ENCODE measurements at regions of chr5 and their contacts with region 1.

Region 1: DNA sequence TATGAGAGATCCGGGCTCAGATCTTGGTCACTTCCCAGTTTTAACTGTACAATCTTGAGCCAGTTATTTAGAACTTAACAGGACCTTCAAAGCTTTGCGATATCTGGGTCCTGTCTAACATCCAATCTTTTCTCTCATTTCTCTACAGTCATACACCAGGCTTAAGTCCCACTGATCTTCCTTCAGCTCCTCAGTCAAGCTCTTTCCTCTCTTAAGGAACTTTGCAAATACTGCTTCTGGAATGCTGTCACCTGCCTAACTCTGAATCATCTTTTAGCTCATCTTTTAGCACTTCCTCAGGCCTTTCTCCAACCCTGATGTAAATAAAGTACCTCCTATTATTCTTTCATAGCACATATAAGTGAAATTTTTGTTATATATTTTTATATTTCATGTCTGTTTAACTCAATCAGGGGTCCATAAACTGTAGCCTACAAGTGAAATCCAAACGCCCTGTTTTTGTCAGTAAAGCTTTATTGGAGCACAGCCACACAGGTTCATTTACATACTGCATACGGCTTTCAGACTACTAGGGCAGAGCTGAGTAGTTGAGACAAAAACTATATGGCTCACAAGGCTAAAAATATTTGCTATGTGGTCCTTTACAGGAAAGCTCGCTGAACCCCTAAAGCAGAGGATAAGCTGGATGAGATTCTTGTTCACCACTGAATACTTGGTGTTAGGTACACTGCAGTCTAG is 63.5 kb downstream of the MEF2C start:
- DNase-seq: no peak
- ATAC-seq: peak in 1 of 2 donors; percentile 31
- H3K4me3 ChIP-seq: no peak overlapping the region
- H3K27ac ChIP-seq: peak overlapping the region; percentile 84 to 90 (median 87)
- H3K4me1 ChIP-seq: peaks cover 81 to 95% of the 10 kb centered on the region in 2 donors
- H3K27me3 ChIP-seq: no peaks in the 10 kb centered on the region
- CTCF ChIP-seq: no peak
- POLR2A ChIP-seq: no peak

Region 2: DNA sequence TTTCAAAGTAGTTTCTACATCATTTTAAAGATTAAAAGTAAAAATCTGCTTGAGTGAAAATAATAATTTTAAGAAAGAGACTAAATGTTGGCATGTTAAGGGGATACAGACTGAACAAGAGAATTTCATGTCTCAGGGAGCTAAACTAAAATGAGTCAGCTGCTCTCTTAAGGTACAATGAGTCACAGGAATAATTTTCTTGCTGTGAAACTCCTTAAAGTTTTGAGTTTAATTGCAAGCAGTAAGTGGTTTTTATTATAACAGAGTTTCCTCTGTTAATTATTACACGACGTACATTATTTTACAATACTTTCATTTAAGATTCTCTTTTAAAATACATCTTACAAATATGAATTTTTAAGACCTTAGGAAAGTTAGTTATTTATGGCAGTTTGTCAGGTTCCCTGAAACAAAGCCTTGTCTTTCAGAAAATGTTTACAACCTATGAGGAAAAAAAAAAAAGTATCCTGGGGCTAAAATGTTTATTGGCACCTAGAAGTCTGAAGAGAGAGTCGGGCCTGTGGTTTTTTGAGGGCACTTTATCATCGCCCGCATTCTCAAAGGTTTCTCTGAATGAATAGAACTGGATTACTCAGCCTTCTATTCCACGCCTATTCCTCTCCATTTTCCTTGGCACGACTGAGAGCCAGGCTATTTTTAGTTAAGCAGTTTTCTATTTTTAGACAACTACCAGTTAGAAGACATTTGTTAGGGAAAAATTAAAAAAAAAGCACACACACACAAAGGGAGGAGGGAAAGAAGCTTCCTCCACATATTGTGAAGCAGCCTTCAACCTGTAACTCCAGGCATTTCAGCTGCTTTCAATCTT is 33.8 kb before region 1 on chr5:
- in situ Hi-C with region 1: no loop called
- intact Hi-C with region 1: loop called (anchors 2 kb)
- DNase-seq: peak; percentile 49
- ATAC-seq: peak; percentile 92
- H3K4me3 ChIP-seq: peak overlapping the region; percentile 14 to 29 (median 22)
- H3K27ac ChIP-seq: peak overlapping the region; percentile 88 to 92 (median 88)
- H3K4me1 ChIP-seq: peaks cover 51 to 62% of the 10 kb centered on the region in 2 donors
- H3K27me3 ChIP-seq: no peaks in the 10 kb centered on the region
- CTCF ChIP-seq: no peak
- POLR2A ChIP-seq: no peak

Region 3: GRCh38 chr5:88860501-88860900 is 41.1 kb after region 1 on chr5:
- in situ Hi-C with region 1: no loop called
- intact Hi-C with region 1: no loop called
- DNase-seq: no peak
- ATAC-seq: no peak
- H3K4me3 ChIP-seq: no peak overlapping the region
- H3K27ac ChIP-seq: peak overlapping the region; percentile 5 to 59 (median 44)
- H3K4me1 ChIP-seq: peaks cover 11 to 24% of the 10 kb centered on the region in 2 donors
- H3K27me3 ChIP-seq: no peaks in the 10 kb centered on the region
- CTCF ChIP-seq: no peak
- POLR2A ChIP-seq: no peak

Region 4: DNA sequence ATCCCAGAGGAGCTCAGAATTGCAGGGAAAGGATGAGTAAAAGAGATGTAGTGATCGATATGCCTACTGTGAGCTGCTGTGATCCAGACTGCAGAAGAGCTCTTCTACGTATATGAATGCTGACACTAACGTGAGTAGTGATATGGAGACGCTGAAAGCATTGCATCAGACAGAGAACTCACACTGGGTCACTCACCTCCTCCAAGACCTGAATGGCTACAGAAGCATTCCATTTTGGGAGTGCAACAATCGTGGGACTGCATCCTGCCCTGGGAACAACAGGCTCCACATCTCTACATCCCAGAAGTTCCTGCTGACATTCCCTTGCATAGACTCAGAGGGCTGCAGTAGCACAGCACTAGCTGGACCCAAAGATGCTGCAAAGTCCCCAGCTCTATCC is 819.4 kb after region 1 on chr5:
- in situ Hi-C with region 1: no loop called
- intact Hi-C with region 1: no loop called
- DNase-seq: no peak
- ATAC-seq: no peak
- H3K4me3 ChIP-seq: no peak overlapping the region
- H3K27ac ChIP-seq: no peak overlapping the region
- H3K4me1 ChIP-seq: no peaks in the 10 kb centered on the region
- H3K27me3 ChIP-seq: no peaks in the 10 kb centered on the region
- CTCF ChIP-seq: no peak
- POLR2A ChIP-seq: no peak

Measured in gastrocnemius medialis (tissue), 4 donors.